Heart left ventricle (tissue), 16 donors: ENCODE measurements at regions of chr15 and their contacts with region 1.

Region 1: GRCh38 chr15:40103176-40103858 is 5.4 kb downstream of the BMF start:
- DNase-seq: peak; percentile 80 to 92 (median 85)
- ATAC-seq: peak; percentile 65 to 77 (median 72)
- H3K4me3 ChIP-seq: peak overlapping the region in 3 of 12 donors; percentile 7 to 35 (median 17)
- H3K27ac ChIP-seq: peak overlapping the region; percentile 60 to 94 (median 84)
- H3K4me1 ChIP-seq: peaks cover 4 to 95% (median 84%) of the 10 kb centered on the region in 12 donors
- H3K27me3 ChIP-seq: no peaks in the 10 kb centered on the region
- CTCF ChIP-seq: no peak
- POLR2A ChIP-seq: no peak

Region 2: DNA sequence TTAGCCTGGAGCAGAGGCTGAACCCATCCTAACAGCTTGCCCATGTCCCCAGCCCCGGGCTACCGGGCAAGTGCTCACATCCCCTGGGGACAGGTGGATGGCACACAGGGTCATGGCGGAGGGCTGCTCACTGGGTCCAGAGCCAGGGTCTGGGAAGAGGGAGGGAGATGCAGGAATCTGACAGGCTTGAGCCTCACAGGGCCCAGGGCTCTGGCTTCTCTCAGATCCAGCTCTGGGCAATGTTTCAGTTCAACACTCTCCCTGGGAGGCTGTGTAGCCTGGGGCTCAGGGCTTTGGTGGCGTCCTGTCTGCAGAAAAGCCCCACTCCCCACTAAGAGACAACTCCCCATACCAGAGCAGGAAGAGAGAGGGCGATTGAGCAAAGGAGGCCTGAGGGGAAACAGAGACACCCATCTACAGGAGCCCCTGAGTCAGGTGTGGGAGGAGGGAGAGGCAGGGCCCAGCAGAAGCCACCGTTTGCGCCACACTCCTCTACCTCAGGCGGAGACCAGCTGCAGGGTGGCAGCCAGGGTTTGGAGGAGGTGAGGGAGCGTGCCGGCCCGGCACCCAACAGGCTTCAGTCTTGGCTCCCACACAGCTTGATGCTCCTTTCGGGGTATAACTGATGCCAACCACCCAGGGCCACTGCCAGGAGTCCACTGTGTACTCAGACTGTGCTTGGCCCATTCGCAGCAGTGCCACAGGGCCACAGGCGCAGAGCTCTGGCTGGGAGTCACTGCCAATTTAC is 47.6 kb before region 1 on chr15:
- intact Hi-C with region 1: loop called in 1 of 10 experiments (anchors 1 kb)
- DNase-seq: peak; percentile 63 to 87 (median 66)
- ATAC-seq: peak; percentile 92 to 96 (median 92)
- H3K4me3 ChIP-seq: no peak overlapping the region
- H3K27ac ChIP-seq: peak overlapping the region in 4 of 12 donors; percentile 25 to 66 (median 38)
- H3K4me1 ChIP-seq: peaks cover 0 to 61% (median 9%) of the 10 kb centered on the region in 12 donors
- H3K27me3 ChIP-seq: no peaks in the 10 kb centered on the region
- CTCF ChIP-seq: no peak
- POLR2A ChIP-seq: no peak